CD14-positive monocyte (primary cell): ENCODE measurements at regions of chr7 and their contacts with region 1.

Region 1: GRCh38 chr7:107743567-107744344 is at the start of gene CBLL1:
- DNase-seq: peak; percentile 89 to 93 (median 91)
- H3K4me3 ChIP-seq: peak within 1 kb of the TSS; percentile 50 to 88 (median 81)
- H3K4me3 Mint-ChIP-seq: peak within 1 kb of the TSS; percentile 99 to 100
- H3K27ac ChIP-seq: peak within 1 kb of the TSS; percentile 93 to 95
- H3K27ac Mint-ChIP-seq: peak within 1 kb of the TSS; percentile 98 to 100 (median 100)
- H3K4me1 ChIP-seq: peaks cover 23 to 29% of the 10 kb centered on the region in 2 donors
- H3K4me1 Mint-ChIP-seq: peaks cover 29% of the 10 kb centered on the region
- H3K27me3 ChIP-seq: no peaks in the 10 kb centered on the region
- H3K27me3 Mint-ChIP-seq: no peaks in the 10 kb centered on the region
- CTCF ChIP-seq: peak; percentile 59
- polyA plus RNA-seq, gene CBLL1: 15.7 to 26.9 (median 20.6) TPM

Region 2: GRCh38 chr7:106504645-106505044 is 1239.1 kb before region 1 on chr7:
- intact Hi-C with region 1: no loop called
- DNase-seq: peak in 1 of 3 donors; percentile 24
- H3K4me3 ChIP-seq: no peak overlapping the region
- H3K4me3 Mint-ChIP-seq: no peak overlapping the region
- H3K27ac ChIP-seq: no peak overlapping the region
- H3K27ac Mint-ChIP-seq: no peak overlapping the region
- H3K4me1 ChIP-seq: peaks cover 4% of the 10 kb centered on the region in 2 donors
- H3K4me1 Mint-ChIP-seq: peaks cover 11% of the 10 kb centered on the region
- H3K27me3 ChIP-seq: no peaks in the 10 kb centered on the region
- H3K27me3 Mint-ChIP-seq: peaks cover 0 to 2% (median 0%) of the 10 kb centered on the region in 3 donors
- CTCF ChIP-seq: no peak

Region 3: DNA sequence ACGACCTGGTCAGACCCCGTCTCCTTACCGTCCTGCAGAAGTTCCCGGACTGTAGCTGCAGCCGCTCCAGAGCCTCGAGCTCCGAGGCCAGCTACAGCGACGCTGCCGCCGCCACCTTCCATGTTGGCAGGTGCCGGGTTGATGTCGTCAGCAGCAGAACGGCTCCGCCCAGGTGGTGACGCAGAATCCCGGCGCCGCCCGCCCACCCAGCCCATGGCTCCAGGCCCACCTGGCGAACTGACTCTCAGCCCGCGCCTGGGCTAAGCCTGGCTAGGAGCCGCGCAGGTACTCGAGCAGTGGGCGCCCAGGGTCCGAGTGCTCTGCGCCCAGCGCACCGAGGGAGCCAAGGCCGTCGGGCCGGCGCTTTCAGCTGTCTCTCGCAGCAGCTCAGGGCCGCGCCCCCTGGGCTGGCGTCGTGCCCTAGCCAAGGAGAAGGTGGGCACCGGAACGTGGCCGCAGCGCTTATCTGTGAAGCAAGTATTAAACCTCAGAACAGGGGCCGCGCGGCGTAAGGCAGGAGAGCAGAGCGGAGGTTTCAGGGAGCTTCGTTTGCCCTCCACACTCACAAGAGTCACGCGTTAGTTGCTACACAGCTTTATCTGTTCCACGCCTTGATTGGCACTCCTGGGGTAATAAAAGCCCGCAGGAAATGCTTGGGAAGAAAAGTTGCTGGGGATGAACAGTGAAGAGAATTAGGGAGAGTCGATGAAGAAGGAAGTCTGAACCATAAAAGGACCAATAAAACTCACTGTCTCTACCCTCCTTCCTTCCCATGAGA is 179.8 kb before region 1 on chr7 and contains the starts of genes COG5 and DUS4L:
- intact Hi-C with region 1: loop called in 1 of 2 experiments (anchors 10 kb)
- DNase-seq: peak; percentile 73 to 79 (median 78)
- H3K4me3 ChIP-seq: peak within 1 kb of the TSS; percentile 88 to 99 (median 93)
- H3K4me3 Mint-ChIP-seq: peak within 1 kb of the TSS; percentile 89 to 91
- H3K27ac ChIP-seq: peak within 1 kb of the TSS; percentile 84 to 98
- H3K27ac Mint-ChIP-seq: peak within 1 kb of the TSS; percentile 91 to 98 (median 95)
- H3K4me1 ChIP-seq: peaks cover 25 to 38% of the 10 kb centered on the region in 2 donors
- H3K4me1 Mint-ChIP-seq: peaks cover 41% of the 10 kb centered on the region
- H3K27me3 ChIP-seq: no peaks in the 10 kb centered on the region
- H3K27me3 Mint-ChIP-seq: no peaks in the 10 kb centered on the region
- CTCF ChIP-seq: no peak
- polyA plus RNA-seq, gene COG5: 12.7 to 29.0 (median 28.1) TPM
- polyA plus RNA-seq, gene DUS4L: 1.6 to 2.3 (median 1.7) TPM

Region 4: GRCh38 chr7:107687656-107688055 is 56.1 kb before region 1 on chr7:
- intact Hi-C with region 1: no loop called
- DNase-seq: peak in 1 of 3 donors; percentile 4
- H3K4me3 ChIP-seq: no peak overlapping the region
- H3K4me3 Mint-ChIP-seq: no peak overlapping the region
- H3K27ac ChIP-seq: no peak overlapping the region
- H3K27ac Mint-ChIP-seq: no peak overlapping the region
- H3K4me1 ChIP-seq: no peaks in the 10 kb centered on the region
- H3K4me1 Mint-ChIP-seq: no peaks in the 10 kb centered on the region
- H3K27me3 ChIP-seq: no peaks in the 10 kb centered on the region
- H3K27me3 Mint-ChIP-seq: peaks cover 0 to 5% (median 0%) of the 10 kb centered on the region in 3 donors
- CTCF ChIP-seq: no peak

Region 5: GRCh38 chr7:107879400-107880035 is 135.8 kb after region 1 on chr7:
- intact Hi-C with region 1: loop called in 1 of 2 experiments (anchors 10 kb)
- DNase-seq: peak; percentile 40 to 72 (median 63)
- H3K4me3 ChIP-seq: no peak overlapping the region
- H3K4me3 Mint-ChIP-seq: no peak overlapping the region
- H3K27ac ChIP-seq: no peak overlapping the region
- H3K27ac Mint-ChIP-seq: no peak overlapping the region
- H3K4me1 ChIP-seq: peaks cover 18 to 24% of the 10 kb centered on the region in 2 donors
- H3K4me1 Mint-ChIP-seq: peaks cover 26% of the 10 kb centered on the region
- H3K27me3 ChIP-seq: peaks cover 3 to 4% of the 10 kb centered on the region in 2 donors
- H3K27me3 Mint-ChIP-seq: peaks cover 1 to 8% (median 4%) of the 10 kb centered on the region in 3 donors
- CTCF ChIP-seq: peak; percentile 84

Region 6: DNA sequence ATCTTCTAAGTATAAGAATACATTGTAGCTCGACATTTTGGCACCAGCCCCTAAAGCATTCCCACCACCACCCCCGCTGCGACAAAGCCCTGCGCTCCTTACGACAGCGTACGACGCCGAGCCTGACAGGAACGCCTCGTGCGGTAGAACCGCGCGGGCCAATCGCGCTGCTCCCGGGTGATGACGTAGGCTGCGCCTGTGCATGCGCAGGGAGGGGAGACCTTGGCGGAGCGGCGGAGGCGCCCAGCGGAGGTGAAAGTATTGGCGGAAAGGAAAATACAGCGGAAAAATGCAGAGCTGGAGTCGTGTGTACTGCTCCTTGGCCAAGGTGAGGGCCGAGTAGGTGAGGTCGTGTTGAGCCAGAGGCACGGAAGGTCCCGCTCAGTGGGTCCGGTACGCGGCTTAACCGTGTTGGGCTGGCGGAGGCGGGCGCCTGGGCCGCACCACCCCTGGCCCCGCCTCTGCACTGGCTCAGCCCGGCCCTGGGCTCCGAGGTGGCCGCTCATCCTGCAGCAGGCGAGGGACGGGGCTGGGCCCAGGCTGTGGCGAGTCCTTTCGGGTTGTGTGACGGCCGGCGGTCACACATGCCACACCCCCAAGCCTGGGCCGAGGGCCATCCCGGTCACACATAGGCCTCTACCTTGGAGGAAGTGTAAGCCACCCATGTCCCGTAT is 147.3 kb after region 1 on chr7 and contains the start of gene DLD:
- intact Hi-C with region 1: loop called in 1 of 2 experiments (anchors 5 kb)
- DNase-seq: peak; percentile 87 to 91 (median 91)
- H3K4me3 ChIP-seq: peak within 1 kb of the TSS; percentile 43 to 80 (median 54)
- H3K4me3 Mint-ChIP-seq: peak within 1 kb of the TSS; percentile 94 to 97
- H3K27ac ChIP-seq: peak within 1 kb of the TSS; percentile 86 to 95
- H3K27ac Mint-ChIP-seq: peak within 1 kb of the TSS; percentile 99 to 100 (median 100)
- H3K4me1 ChIP-seq: peaks cover 27 to 34% of the 10 kb centered on the region in 2 donors
- H3K4me1 Mint-ChIP-seq: peaks cover 33% of the 10 kb centered on the region
- H3K27me3 ChIP-seq: no peaks in the 10 kb centered on the region
- H3K27me3 Mint-ChIP-seq: peaks cover 0 to 3% (median 0%) of the 10 kb centered on the region in 3 donors
- CTCF ChIP-seq: no peak
- polyA plus RNA-seq, gene DLD: 54.5 to 73.6 (median 70.1) TPM

Region 7: DNA sequence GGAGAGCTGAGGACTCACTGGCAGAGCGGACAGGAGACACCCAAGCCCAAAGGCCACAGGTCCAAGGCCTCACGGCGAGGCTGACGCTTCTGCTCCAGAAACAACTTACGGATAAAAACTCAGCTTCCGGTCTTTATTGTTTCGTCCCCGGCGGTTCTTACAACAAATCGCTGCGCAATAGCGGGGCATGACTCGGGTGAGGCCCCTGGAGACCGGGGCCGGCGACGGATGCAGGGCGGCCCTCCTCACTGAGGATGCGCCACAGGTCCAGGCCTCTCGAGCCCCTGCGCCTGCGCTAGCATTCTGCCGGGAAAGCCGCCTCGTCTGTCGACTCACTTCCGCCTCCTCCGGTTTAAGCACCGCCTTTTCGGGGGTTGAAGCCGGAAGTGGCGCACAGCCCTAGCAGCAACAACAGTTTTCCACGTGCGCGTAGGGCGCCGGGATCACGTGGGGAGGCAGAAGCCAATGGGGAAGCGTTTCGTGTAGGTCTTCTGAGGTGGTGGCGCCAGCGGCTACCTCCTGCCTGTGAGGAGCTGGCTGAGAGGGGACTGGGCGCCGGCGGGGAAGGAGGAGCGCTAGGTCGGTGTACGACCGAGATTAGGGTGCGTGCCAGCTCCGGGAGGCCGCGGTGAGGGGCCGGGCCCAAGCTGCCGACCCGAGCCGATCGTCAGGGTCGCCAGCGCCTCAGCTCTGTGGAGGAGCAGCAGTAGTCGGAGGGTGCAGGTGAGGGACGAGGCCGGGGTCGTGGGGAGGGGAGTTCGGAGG is 825.8 kb after region 1 on chr7 and contains the starts of genes DNAJB9 and THAP5:
- intact Hi-C with region 1: loop called in 1 of 2 experiments (anchors 5 kb)
- DNase-seq: peak; percentile 100
- H3K4me3 ChIP-seq: peak within 1 kb of the TSS; percentile 77 to 87 (median 78)
- H3K4me3 Mint-ChIP-seq: peak within 1 kb of the TSS; percentile 93 to 96
- H3K27ac ChIP-seq: peak within 1 kb of the TSS; percentile 94 to 99
- H3K27ac Mint-ChIP-seq: peak within 1 kb of the TSS; percentile 94 to 99 (median 98)
- H3K4me1 ChIP-seq: peaks cover 21 to 38% of the 10 kb centered on the region in 2 donors
- H3K4me1 Mint-ChIP-seq: peaks cover 23% of the 10 kb centered on the region
- H3K27me3 ChIP-seq: no peaks in the 10 kb centered on the region
- H3K27me3 Mint-ChIP-seq: no peaks in the 10 kb centered on the region
- CTCF ChIP-seq: no peak
- polyA plus RNA-seq, gene DNAJB9: 18.1 to 20.7 (median 18.4) TPM
- polyA plus RNA-seq, gene THAP5: 3.0 to 10.7 (median 9.9) TPM